Activated B cell treated with CpG ODN at 0.5 μM for 24 hours (primary cell): ENCODE measurements at regions of chr9 and their contacts with region 1.

Region 1: DNA sequence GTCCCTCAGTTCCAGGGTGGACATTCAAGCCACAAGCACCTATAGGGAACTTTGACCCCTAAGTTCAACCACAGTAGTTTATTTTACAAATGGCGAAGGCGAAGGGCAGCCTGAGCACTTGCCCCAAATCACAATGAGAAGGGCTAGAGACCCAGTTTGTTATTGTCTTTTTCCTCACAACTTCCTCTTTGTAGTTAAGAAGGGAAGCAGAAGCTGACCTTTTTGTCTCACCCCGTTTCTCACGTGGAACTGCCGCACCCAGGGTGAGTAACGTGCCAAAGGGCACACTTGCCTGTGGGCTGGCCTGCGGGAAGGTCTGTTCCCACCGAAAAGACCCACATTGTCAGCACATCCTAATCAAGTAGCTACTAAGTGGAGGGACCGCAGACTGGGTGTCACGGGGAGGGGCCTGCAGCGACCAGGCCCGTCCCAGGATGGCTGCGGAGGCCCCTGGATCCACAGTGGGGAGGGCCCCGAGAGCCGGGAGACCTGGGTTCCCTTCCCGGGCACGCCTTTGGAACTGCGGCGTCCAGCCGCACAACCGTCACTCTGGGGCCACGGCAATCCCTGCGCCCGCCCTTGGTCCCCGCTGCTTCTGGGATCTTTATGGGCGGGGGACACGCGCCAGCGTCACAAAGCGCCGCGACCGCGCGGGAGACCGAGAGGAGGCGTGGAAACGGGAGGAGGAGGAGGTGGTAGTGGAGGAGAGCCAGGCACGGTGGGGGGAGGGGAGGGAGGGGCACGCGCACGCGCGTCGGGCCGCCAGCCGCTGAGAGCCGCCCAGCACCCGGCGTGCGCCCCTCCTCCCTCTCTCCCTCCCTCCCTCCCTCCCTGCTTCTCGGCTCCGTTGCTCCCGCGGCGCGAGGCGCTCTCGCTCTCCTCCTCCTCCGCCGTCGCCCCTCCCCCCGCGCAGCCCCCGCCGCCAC is at the start of gene UBE2R2:
- DNase-seq: peak; percentile 79
- ATAC-seq: peak; percentile 72
- H3K4me3 Mint-ChIP-seq: peak within 1 kb of the TSS; percentile 90
- H3K27ac Mint-ChIP-seq: peak within 1 kb of the TSS; percentile 98
- H3K4me1 Mint-ChIP-seq: peaks cover 61% of the 10 kb centered on the region
- H3K27me3 Mint-ChIP-seq: no peaks in the 10 kb centered on the region
- CTCF ChIP-seq: no peak
- total RNA-seq, gene UBE2R2: 28.5 and 28.9 TPM in 2 replicates

Region 2: DNA sequence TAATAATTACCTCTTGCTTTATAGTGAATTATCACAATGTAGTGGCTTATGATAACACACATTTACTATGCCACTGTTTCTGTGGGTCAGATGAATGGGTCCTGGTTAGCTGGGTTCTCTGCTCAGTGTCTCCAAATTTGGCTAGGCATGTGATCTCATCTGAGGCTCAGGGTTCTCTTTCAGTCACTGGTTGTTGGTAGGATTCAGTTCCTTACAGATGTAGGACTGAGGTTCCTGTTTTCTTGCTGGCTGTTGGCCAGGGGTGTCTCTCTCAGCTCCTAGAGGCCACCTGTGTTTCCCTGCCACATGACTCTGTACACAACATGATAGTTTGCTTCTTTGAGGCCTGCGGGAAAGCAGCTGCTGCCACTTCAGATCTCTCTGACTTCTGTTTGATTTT is 519.2 kb before region 1 on chr9:
- CTCF ChIA-PET with region 1: no interaction called
- POLR2A ChIA-PET with region 1: no interaction called
- intact Hi-C with region 1: loop called (anchors 5 kb)
- DNase-seq: peak; percentile 31
- ATAC-seq: peak; percentile 90
- H3K4me3 Mint-ChIP-seq: peak overlapping the region; percentile 62
- H3K27ac Mint-ChIP-seq: peak overlapping the region; percentile 93
- H3K4me1 Mint-ChIP-seq: peaks cover 84% of the 10 kb centered on the region
- H3K27me3 Mint-ChIP-seq: no peaks in the 10 kb centered on the region
- CTCF ChIP-seq: no peak

Region 3: DNA sequence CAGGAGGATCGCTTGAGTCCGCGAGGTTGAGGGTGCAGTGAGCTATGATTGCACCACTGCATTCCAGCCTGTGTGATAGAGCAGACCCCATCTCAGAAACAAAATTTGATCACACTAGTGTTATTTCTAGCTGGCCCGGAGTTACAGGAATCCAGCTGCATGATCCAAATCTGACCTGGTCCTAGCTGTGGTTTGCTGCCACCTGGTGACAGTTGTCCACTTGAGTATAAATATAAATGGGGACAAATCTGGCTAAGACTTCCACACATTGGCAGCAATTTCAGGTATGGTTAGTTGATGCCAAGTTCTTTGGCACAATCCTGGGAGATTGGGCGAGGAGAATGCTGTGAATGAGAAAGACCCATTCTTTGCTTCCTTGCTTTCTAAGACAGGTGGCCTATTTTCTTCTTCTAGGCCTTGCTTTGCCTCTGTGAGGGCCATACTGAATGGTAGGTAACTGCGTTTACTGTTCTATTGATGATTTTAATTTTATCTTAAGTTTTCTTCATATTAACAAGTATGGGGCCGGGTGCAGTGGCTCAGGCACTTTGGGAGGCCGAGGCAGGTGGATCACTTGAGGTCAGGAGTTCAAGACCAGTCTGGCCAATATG is 35.7 kb after region 1 on chr9:
- CTCF ChIA-PET with region 1: interaction called, 77 read pairs
- POLR2A ChIA-PET with region 1: interaction called, 17 read pairs
- intact Hi-C with region 1: loop called (anchors 1 kb)
- DNase-seq: peak; percentile 23
- ATAC-seq: peak; percentile 70
- H3K4me3 Mint-ChIP-seq: no peak overlapping the region
- H3K27ac Mint-ChIP-seq: no peak overlapping the region
- H3K4me1 Mint-ChIP-seq: peaks cover 40% of the 10 kb centered on the region
- H3K27me3 Mint-ChIP-seq: no peaks in the 10 kb centered on the region
- CTCF ChIP-seq: no peak

Region 4: DNA sequence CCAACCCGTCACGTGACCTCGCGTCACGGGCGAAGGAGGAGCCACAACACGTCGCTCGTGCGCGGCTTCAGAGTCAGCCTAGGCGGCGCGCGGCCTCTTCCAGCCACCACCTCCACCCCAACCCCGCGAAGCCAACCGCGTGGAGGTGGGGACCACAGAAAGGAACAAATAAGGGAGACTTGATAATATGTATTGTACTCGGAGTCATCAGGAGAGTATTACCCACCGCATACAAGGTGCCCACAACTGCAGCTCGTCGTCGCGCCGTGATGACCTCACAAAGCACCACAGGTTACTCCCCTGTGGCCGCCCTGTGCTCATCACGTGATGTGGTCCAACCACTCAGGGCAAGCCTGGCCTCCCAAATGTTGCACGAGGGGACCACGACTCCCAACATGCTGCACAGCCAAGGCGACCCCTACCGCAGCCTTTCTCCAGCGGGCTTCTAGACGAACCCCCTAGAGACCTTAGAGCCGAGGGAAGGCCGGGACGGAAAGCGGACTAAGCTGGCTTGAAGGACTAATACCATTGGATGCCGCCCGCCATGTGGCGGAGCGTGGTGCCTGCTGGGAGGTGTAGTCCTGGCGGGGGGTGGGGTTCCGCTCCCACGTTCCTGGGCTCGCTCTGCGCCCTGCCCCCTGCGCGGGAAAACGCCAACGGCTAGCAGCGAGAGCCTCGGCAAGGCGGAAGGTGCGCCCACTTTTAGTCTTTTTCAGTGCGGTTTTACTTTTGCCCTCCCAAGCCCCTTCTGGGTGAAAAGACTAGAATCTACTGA is 232.5 kb after region 1 on chr9:
- CTCF ChIA-PET with region 1: no interaction called
- POLR2A ChIA-PET with region 1: interaction called, 4 read pairs
- intact Hi-C with region 1: loop called (anchors 1 kb)
- DNase-seq: peak; percentile 97
- ATAC-seq: peak; percentile 80
- H3K4me3 Mint-ChIP-seq: peak overlapping the region; percentile 99
- H3K27ac Mint-ChIP-seq: peak overlapping the region; percentile 100
- H3K4me1 Mint-ChIP-seq: peaks cover 25% of the 10 kb centered on the region
- H3K27me3 Mint-ChIP-seq: no peaks in the 10 kb centered on the region
- CTCF ChIP-seq: no peak

Region 5: GRCh38 chr9:34171753-34172535 is 355.4 kb after region 1 on chr9:
- CTCF ChIA-PET with region 1: no interaction called
- POLR2A ChIA-PET with region 1: no interaction called
- intact Hi-C with region 1: loop called (anchors 2 kb)
- DNase-seq: peak; percentile 22
- ATAC-seq: peak; percentile 99
- H3K4me3 Mint-ChIP-seq: peak overlapping the region; percentile 29
- H3K27ac Mint-ChIP-seq: no peak overlapping the region
- H3K4me1 Mint-ChIP-seq: peaks cover 11% of the 10 kb centered on the region
- H3K27me3 Mint-ChIP-seq: peaks cover 12% of the 10 kb centered on the region
- CTCF ChIP-seq: no peak

Region 6: DNA sequence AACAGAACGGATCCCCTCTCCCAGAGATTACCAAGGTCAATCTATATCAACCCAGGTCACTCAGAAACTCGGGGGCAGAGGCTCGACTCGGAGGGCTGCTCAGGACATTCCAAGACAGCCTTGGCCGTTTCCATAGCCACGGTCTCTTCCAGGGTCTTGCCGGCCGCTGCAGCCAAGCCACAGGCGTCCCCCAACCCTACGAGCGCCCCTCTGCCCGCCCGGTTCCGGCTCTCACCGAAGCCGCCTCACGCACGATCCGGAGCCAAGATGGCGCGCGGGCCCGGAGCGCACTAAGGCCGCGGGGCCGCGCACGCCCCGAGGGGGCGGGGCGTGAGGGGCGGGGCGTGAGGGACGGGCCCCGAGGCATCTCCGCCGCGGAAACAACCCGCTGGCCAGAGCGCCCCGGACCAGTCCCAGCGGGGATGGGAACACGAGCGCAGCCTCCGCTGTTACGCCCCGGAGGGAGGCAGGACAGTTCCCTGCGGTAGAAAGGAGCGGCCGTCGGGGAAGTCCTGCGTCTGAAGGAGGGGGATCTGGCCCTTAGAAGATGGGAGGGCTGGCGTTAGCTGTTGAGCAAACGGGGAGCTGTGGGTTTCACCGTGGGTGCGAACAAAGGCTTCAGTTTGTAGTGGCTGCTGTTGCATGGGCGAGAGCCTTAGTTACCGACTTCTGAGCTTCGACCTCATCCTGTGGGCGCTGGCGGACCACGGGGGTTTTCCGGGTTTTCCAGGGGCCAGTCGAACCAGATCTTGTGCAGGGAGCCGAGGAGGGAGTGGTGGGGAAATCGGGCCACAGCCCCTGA is 795.4 kb after region 1 on chr9 and contains the start of gene RPP25L:
- CTCF ChIA-PET with region 1: no interaction called
- POLR2A ChIA-PET with region 1: no interaction called
- intact Hi-C with region 1: loop called (anchors 5 kb)
- DNase-seq: peak; percentile 90
- ATAC-seq: peak; percentile 96
- H3K4me3 Mint-ChIP-seq: peak within 1 kb of the TSS; percentile 86
- H3K27ac Mint-ChIP-seq: peak within 1 kb of the TSS; percentile 90
- H3K4me1 Mint-ChIP-seq: peaks cover 19% of the 10 kb centered on the region
- H3K27me3 Mint-ChIP-seq: no peaks in the 10 kb centered on the region
- CTCF ChIP-seq: no peak
- total RNA-seq, gene RPP25L: 17.5 and 18.9 TPM in 2 replicates